Activated CD8-positive, alpha-beta memory T cell treated with anti-CD3 and anti-CD28 coated beads, Interleukin-2, amount 10 ng/mL, durations not matched to agents 7 days and 5 days (primary cell): ENCODE measurements at regions of chrX and their contacts with region 1.

Region 1: DNA sequence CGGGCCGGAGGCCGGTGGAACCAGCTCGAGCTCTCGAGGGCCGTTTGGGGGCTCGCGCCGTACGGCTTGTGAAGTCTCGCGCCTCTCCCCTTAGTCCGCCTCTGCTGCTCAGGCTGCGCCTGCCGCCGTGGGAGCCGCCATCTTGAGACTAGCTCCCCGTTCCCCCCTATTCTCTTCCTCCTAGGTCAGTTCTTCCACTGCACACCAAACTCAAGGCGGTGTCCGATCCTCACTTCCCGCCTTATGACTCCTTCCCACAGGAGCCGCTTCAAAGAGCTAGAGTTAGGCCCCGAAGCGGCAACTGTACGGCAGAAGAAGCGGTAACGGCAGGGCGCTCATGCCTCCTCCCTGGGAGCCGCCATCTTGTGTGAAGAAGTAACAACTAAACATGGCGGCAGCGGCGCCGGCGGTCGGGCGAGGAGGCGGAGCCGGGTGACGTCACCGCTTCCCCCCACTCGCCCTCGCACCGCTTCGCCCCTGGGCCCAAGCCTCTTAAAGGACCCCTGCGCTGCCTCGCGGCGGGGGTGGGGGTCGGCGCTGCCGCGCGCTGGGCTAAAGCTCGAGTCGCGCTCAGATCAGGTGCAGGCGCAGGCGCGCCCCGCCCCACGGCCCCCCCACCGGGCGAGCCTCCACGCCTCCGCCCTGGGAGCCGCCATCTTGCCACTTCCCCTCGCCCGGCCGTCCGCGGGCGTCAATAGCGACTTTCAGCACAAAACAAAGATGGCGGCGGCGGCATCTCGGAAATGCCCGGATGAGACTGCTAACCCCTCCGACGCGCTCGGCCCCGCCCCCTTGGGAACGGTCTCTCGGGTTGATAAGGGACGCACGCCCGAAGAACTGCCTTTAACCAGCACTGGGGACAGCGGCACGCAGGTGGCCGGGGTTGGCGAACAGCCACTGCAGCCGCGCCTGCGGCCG is at the start of gene HCFC1:
- DNase-seq: peak; percentile 94
- ATAC-seq: peak; percentile 41
- H3K4me3 Mint-ChIP-seq: peak within 1 kb of the TSS; percentile 95
- H3K27ac Mint-ChIP-seq: peak within 1 kb of the TSS; percentile 100
- H3K4me1 Mint-ChIP-seq: peaks cover 30% of the 10 kb centered on the region
- H3K27me3 Mint-ChIP-seq: no peaks in the 10 kb centered on the region
- total RNA-seq, gene HCFC1: 136 to 138 TPM

Region 2: DNA sequence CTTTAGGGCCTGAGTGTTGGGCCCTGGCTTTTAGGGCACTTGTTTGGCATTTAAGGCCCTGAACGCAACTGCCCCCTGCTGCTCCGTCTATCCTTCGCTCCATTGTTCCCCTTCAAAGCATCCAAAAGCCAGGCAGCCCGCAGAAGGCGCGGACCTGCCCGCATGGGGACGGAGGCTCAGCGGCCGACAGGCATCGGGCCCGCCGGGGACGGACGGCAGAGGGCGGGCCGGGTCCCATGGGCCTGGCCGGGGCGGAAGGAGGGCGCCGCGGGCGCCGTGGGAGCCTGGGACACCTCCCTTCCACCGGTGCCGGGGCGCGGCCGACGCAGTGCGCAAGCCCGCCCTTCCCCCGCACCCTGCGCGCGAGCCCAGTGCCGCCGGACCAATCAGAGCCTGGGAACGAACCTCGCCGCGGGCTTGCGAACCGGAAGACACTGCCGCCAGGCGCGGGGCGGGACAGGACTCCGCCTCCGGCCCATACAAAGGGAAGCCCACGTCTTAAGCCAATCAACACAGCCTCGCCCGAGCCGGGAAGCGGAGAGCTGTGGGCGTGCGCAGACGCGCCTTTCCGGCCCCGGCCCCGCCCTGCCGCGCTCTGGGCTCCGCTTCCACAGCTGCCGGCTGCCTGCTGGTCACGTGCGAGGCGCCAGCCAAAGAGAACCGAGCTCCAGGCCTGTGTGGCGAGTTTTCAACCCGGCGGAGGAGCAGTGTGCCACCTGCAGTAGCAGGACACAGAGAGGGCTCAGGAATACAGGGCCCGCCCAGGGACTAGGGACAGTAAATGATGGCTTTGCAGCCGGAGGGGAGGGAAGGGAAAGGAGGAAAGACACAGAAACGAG is 43.6 kb before region 1 on chrX:
- CTCF ChIA-PET with region 1: interaction called, 49 read pairs
- DNase-seq: peak; percentile 96
- ATAC-seq: peak; percentile 82
- H3K4me3 Mint-ChIP-seq: peak overlapping the region; percentile 85
- H3K27ac Mint-ChIP-seq: peak overlapping the region; percentile 97
- H3K4me1 Mint-ChIP-seq: peaks cover 32% of the 10 kb centered on the region
- H3K27me3 Mint-ChIP-seq: no peaks in the 10 kb centered on the region

Region 3: DNA sequence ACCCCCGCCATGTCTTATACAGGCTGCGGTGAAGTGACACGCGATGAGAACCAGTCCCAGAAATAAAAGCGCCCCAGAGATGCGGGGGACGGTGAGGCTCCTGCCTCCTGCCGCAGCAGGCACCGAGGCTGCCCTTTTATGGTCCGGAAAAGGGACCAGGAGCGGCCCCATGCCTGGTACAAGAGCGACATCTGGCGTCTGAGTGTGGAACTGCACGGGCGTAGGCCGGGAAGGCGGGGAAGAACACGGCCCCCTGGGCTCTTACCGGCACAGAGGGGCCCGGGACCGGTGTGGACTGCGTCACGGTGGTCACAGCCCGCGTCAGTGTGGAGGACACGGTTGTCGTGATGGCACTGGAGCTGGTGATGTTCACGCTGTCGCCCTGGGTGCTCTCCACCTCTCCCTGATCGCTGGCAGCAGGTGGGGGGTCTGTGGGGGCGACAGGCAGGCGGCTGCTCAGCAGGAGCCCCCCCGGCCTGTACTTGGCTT is 18.3 kb before region 1 on chrX:
- CTCF ChIA-PET with region 1: interaction called, 52 read pairs
- DNase-seq: peak; percentile 81
- ATAC-seq: peak; percentile 73
- H3K4me3 Mint-ChIP-seq: no peak overlapping the region
- H3K27ac Mint-ChIP-seq: peak overlapping the region; percentile 66
- H3K4me1 Mint-ChIP-seq: peaks cover 39% of the 10 kb centered on the region
- H3K27me3 Mint-ChIP-seq: no peaks in the 10 kb centered on the region

Region 4: GRCh38 chrX:154074199-154074598 is 102.5 kb after region 1 on chrX:
- CTCF ChIA-PET with region 1: no interaction called
- DNase-seq: no peak
- ATAC-seq: no peak
- H3K4me3 Mint-ChIP-seq: no peak overlapping the region
- H3K27ac Mint-ChIP-seq: no peak overlapping the region
- H3K4me1 Mint-ChIP-seq: peaks cover 38% of the 10 kb centered on the region
- H3K27me3 Mint-ChIP-seq: no peaks in the 10 kb centered on the region